ENCODE measurements at regions of chr2 and their contacts with region 1.

Region 1: DNA sequence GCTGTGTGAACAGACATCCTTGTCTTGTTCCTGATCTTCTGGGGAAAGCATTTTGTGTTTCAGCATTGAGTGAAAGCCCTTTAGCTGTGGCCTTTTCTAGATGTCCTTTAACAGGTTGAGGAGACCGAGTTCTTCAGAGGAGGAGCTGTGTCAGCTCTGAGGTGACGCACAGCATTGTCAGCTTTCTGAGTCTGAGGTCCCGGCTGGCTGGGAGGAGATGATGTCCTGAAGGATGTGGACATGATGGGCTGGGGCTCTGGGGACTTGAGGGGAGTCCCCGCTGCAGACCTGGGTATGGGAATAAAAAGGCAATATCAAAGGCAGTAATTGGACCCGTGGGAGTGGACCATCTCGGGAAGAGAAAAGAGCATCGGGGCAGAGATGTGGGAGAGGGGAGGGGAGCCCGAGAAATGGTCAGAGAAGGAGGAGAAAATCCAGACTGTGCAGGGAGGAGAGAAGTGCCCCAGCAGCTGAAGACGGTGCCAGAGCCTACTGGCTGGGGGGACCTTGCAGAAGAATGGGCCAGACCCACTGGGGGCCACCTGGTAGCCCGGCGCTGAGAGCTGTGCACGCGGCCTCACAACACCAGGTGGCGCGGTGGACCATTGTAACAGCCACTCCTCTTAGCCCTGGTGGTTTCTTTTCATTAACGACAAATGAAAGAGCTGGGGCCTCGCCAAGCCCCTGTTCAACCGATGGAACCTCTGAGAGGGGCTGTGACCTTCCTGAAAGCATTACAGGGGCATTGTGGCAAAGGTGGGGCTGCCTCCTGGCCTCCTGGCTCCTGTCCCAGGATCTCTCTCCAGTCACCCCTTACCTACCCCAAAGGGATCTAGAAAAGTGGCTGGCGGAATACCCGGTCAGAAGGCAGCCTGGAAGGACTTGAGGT is 61.6 kb downstream of the ST3GAL5 start:
- DNase-seq: peak; percentile 71 to 90 (median 82)
- ATAC-seq: peak; percentile 99
- H3K4me3 ChIP-seq: peak overlapping the region; percentile 1 to 37
- H3K4me3 Mint-ChIP-seq: no peak overlapping the region
- H3K27ac ChIP-seq: no peak overlapping the region
- H3K27ac Mint-ChIP-seq: peak overlapping the region; percentile 62
- H3K4me1 ChIP-seq: peaks cover 8% of the 10 kb centered on the region
- H3K4me1 Mint-ChIP-seq: peaks cover 15% of the 10 kb centered on the region
- H3K27me3 ChIP-seq: no peaks in the 10 kb centered on the region
- H3K27me3 Mint-ChIP-seq: no peaks in the 10 kb centered on the region
- CTCF ChIP-seq: peak; percentile 83

Region 2: DNA sequence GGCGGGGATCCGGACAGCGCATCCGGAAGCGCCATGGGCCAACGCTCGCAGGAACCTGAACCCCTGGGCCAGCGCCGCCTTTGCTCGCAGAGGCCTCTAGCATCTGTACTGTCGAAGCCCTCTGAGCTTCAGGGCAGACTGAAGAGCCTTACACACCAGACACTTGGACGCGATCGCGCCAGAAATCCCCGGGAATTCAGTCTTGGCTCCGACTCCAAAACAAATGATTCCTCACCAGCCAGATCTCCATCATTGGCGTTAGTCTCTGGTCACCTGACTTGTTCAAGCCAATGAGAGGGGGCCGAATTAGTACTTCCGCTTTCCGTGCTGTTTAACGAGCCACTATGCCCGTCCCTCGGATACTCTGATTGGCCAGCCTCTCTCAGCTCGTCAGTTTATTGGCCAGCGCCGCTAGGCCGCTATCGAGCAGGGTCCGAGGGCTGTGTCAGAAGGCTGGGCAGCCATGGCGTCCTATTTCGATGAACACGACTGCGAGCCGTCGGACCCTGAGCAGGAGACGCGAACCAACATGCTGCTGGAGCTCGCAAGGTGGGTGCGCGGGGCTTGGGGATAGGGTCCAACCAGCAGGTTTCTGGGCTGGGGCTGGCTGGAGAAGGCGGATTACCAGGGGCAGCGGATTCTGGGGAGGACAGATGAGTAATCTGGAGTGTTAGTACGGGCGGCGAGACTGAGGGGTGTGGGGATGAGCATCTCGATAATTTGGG is 231.8 kb before region 1 on chr2 and contains the start of gene RNF181:
- CTCF ChIA-PET with region 1: no interaction called
- POLR2A ChIA-PET with region 1: no interaction called
- intact Hi-C with region 1: no loop called
- DNase-seq: peak; percentile 72 to 97 (median 89)
- ATAC-seq: peak; percentile 98
- H3K4me3 ChIP-seq: peak within 1 kb of the TSS; percentile 75 to 78
- H3K4me3 Mint-ChIP-seq: peak within 1 kb of the TSS; percentile 97
- H3K27ac ChIP-seq: peak within 1 kb of the TSS; percentile 73 to 77
- H3K27ac Mint-ChIP-seq: peak within 1 kb of the TSS; percentile 97
- H3K4me1 ChIP-seq: peaks cover 25% of the 10 kb centered on the region
- H3K4me1 Mint-ChIP-seq: peaks cover 35% of the 10 kb centered on the region
- H3K27me3 ChIP-seq: no peaks in the 10 kb centered on the region
- H3K27me3 Mint-ChIP-seq: no peaks in the 10 kb centered on the region
- CTCF ChIP-seq: no peak
- total RNA-seq, gene RNF181: 38.1 to 41.0 TPM

Region 3: DNA sequence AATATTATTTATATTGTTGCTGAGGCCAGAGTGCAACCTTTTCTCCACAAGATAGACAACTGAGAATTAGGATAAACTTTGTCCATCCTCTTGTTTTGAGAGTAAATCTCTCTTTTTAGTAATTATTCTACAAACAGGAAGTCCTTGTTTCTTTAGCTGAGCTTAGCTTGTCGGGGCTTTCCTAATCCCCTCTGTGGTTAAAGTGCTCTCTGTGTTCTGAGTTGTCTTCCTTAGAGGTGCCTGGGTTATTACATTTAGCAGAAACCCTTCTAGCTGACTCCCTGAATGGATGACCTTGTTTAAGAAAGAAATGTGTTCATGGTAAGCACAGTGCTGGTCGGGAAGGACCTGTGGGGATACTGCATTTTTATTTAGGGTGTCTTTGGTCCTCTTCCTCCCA is 198.6 kb before region 1 on chr2:
- CTCF ChIA-PET with region 1: no interaction called
- POLR2A ChIA-PET with region 1: no interaction called
- intact Hi-C with region 1: no loop called
- DNase-seq: peak in 2 of 9 experiments; percentile 23 to 62
- ATAC-seq: peak; percentile 82
- H3K4me3 ChIP-seq: no peak overlapping the region
- H3K4me3 Mint-ChIP-seq: no peak overlapping the region
- H3K27ac ChIP-seq: peak overlapping the region in 1 of 2 experiments; percentile 16
- H3K27ac Mint-ChIP-seq: peak overlapping the region; percentile 24
- H3K4me1 ChIP-seq: peaks cover 13% of the 10 kb centered on the region
- H3K4me1 Mint-ChIP-seq: peaks cover 16% of the 10 kb centered on the region
- H3K27me3 ChIP-seq: no peaks in the 10 kb centered on the region
- H3K27me3 Mint-ChIP-seq: no peaks in the 10 kb centered on the region
- CTCF ChIP-seq: no peak

Region 4: GRCh38 chr2:85712849-85713602 is 114.2 kb before region 1 on chr2:
- CTCF ChIA-PET with region 1: no interaction called
- POLR2A ChIA-PET with region 1: no interaction called
- intact Hi-C with region 1: no loop called
- DNase-seq: no peak
- ATAC-seq: no peak
- H3K4me3 ChIP-seq: no peak overlapping the region
- H3K4me3 Mint-ChIP-seq: no peak overlapping the region
- H3K27ac ChIP-seq: no peak overlapping the region
- H3K27ac Mint-ChIP-seq: no peak overlapping the region
- H3K4me1 ChIP-seq: no peaks in the 10 kb centered on the region
- H3K4me1 Mint-ChIP-seq: peaks cover 5% of the 10 kb centered on the region
- H3K27me3 ChIP-seq: no peaks in the 10 kb centered on the region
- H3K27me3 Mint-ChIP-seq: no peaks in the 10 kb centered on the region
- CTCF ChIP-seq: no peak

Region 5: DNA sequence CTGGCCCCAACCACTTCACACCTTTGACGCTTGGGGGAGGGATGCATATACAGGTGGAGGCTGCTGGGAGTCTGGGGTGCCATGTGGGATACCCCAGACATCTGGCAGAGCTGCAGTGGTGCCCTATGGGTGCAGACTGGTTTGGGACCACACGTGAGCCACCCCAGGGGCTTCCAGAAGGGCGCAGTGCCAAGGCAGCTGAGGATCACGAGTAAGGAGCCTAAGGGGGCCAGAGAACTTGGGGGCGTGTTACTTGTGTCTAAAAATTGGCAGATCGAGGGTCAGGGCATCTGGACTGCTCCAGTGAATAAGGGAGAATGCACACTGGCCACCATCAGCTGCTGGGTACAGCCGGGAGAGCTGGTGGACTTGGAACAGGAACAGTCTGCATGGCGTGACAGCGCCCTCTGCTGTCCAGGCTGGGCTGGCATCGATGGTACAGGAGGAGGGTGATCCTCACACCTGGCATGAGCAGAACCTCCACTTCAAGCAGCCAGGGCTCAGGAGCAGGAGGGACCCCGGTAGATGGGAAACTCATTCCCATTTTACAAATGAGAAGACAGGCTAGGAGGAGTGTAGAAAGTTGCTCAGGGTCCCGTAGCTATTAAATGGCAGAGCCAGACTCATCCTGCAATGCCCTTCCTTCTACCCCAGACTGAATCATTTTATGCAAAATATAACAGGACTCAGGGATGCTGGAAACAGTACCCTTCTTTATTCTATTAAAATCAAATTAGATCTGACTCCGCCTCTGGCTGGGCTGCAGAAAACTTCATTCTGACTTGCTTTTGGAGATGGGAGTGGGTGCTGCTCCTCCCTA is 13.0 kb before region 1 on chr2:
- CTCF ChIA-PET with region 1: interaction called, 21 read pairs
- POLR2A ChIA-PET with region 1: no interaction called
- intact Hi-C with region 1: no loop called
- DNase-seq: peak; percentile 67 to 87 (median 82)
- ATAC-seq: peak; percentile 89
- H3K4me3 ChIP-seq: no peak overlapping the region
- H3K4me3 Mint-ChIP-seq: no peak overlapping the region
- H3K27ac ChIP-seq: no peak overlapping the region
- H3K27ac Mint-ChIP-seq: no peak overlapping the region
- H3K4me1 ChIP-seq: no peaks in the 10 kb centered on the region
- H3K4me1 Mint-ChIP-seq: no peaks in the 10 kb centered on the region
- H3K27me3 ChIP-seq: no peaks in the 10 kb centered on the region
- H3K27me3 Mint-ChIP-seq: peaks cover 12% of the 10 kb centered on the region
- CTCF ChIP-seq: peak; percentile 82

Region 6: GRCh38 chr2:85852937-85853498 is 25.8 kb after region 1 on chr2:
- CTCF ChIA-PET with region 1: interaction called, 32 read pairs
- POLR2A ChIA-PET with region 1: interaction called, 6 read pairs
- intact Hi-C with region 1: loop called in 1 of 2 experiments (anchors 2 kb)
- DNase-seq: peak; percentile 59 to 93 (median 81)
- ATAC-seq: peak; percentile 89
- H3K4me3 ChIP-seq: peak overlapping the region; percentile 48 to 49
- H3K4me3 Mint-ChIP-seq: peak overlapping the region; percentile 85
- H3K27ac ChIP-seq: peak overlapping the region; percentile 87 to 97
- H3K27ac Mint-ChIP-seq: peak overlapping the region; percentile 99
- H3K4me1 ChIP-seq: peaks cover 63% of the 10 kb centered on the region
- H3K4me1 Mint-ChIP-seq: peaks cover 73% of the 10 kb centered on the region
- H3K27me3 ChIP-seq: no peaks in the 10 kb centered on the region
- H3K27me3 Mint-ChIP-seq: no peaks in the 10 kb centered on the region
- CTCF ChIP-seq: no peak

Region 7: GRCh38 chr2:85926931-85927661 is 99.9 kb after region 1 on chr2:
- CTCF ChIA-PET with region 1: interaction called, 14 read pairs
- POLR2A ChIA-PET with region 1: interaction called, 4 read pairs
- intact Hi-C with region 1: no loop called
- DNase-seq: no peak
- ATAC-seq: no peak
- H3K4me3 ChIP-seq: no peak overlapping the region
- H3K4me3 Mint-ChIP-seq: no peak overlapping the region
- H3K27ac ChIP-seq: no peak overlapping the region
- H3K27ac Mint-ChIP-seq: no peak overlapping the region
- H3K4me1 ChIP-seq: no peaks in the 10 kb centered on the region
- H3K4me1 Mint-ChIP-seq: peaks cover 25% of the 10 kb centered on the region
- H3K27me3 ChIP-seq: no peaks in the 10 kb centered on the region
- H3K27me3 Mint-ChIP-seq: peaks cover 5% of the 10 kb centered on the region
- CTCF ChIP-seq: no peak

Region 8: DNA sequence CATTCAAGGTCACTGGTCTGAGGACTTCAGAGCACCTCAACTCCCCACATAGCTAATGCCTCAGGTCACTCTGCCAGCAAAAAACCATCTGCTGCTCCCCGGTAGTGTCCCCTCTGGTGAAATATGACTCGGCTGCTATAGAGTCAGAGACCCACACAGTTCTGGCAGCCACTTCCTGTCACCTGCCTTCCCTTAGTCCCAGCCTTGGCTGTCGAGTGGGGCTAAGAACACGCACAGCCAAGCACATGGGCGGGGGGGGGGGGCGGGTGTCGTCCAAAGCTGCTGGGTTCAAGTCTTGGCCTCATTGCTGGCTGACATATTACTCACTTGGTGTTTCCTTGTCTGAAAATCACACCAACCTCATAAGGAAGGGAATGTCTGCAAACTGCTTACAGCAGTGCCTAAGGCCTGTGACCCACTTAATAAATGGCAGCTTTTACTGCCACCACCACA is 240.9 kb after region 1 on chr2:
- CTCF ChIA-PET with region 1: interaction called, 10 read pairs
- POLR2A ChIA-PET with region 1: no interaction called
- intact Hi-C with region 1: no loop called
- DNase-seq: peak; percentile 18 to 78 (median 52)
- ATAC-seq: peak; percentile 98
- H3K4me3 ChIP-seq: no peak overlapping the region
- H3K4me3 Mint-ChIP-seq: peak overlapping the region; percentile 50
- H3K27ac ChIP-seq: peak overlapping the region in 1 of 2 experiments; percentile 39
- H3K27ac Mint-ChIP-seq: peak overlapping the region; percentile 78
- H3K4me1 ChIP-seq: peaks cover 13% of the 10 kb centered on the region
- H3K4me1 Mint-ChIP-seq: peaks cover 20% of the 10 kb centered on the region
- H3K27me3 ChIP-seq: no peaks in the 10 kb centered on the region
- H3K27me3 Mint-ChIP-seq: no peaks in the 10 kb centered on the region
- CTCF ChIP-seq: no peak

Region 9: GRCh38 chr2:86105252-86105968 is 278.2 kb after region 1 on chr2 and contains the start of gene POLR1A:
- CTCF ChIA-PET with region 1: interaction called, 6 read pairs
- POLR2A ChIA-PET with region 1: interaction called, 3 read pairs
- intact Hi-C with region 1: loop called in 1 of 2 experiments (anchors 1 kb)
- DNase-seq: peak; percentile 64 to 94 (median 83)
- ATAC-seq: peak; percentile 77
- H3K4me3 ChIP-seq: peak within 1 kb of the TSS; percentile 66 to 92
- H3K4me3 Mint-ChIP-seq: peak within 1 kb of the TSS; percentile 92
- H3K27ac ChIP-seq: peak within 1 kb of the TSS; percentile 80 to 87
- H3K27ac Mint-ChIP-seq: peak within 1 kb of the TSS; percentile 99
- H3K4me1 ChIP-seq: peaks cover 24% of the 10 kb centered on the region
- H3K4me1 Mint-ChIP-seq: peaks cover 66% of the 10 kb centered on the region
- H3K27me3 ChIP-seq: no peaks in the 10 kb centered on the region
- H3K27me3 Mint-ChIP-seq: no peaks in the 10 kb centered on the region
- CTCF ChIP-seq: no peak
- total RNA-seq, gene POLR1A: 12.3 to 15.2 TPM

Region 10: GRCh38 chr2:86238354-86238753 is 411.1 kb after region 1 on chr2:
- CTCF ChIA-PET with region 1: no interaction called
- POLR2A ChIA-PET with region 1: no interaction called
- intact Hi-C with region 1: no loop called
- DNase-seq: peak in 6 of 9 experiments; percentile 15 to 64 (median 30)
- ATAC-seq: peak; percentile 88
- H3K4me3 ChIP-seq: no peak overlapping the region
- H3K4me3 Mint-ChIP-seq: no peak overlapping the region
- H3K27ac ChIP-seq: no peak overlapping the region
- H3K27ac Mint-ChIP-seq: no peak overlapping the region
- H3K4me1 ChIP-seq: peaks cover 6% of the 10 kb centered on the region
- H3K4me1 Mint-ChIP-seq: peaks cover 11% of the 10 kb centered on the region
- H3K27me3 ChIP-seq: no peaks in the 10 kb centered on the region
- H3K27me3 Mint-ChIP-seq: peaks cover 6% of the 10 kb centered on the region
- CTCF ChIP-seq: no peak